ENCODE measurements at regions of chr1 and their contacts with region 1.

Region 1: DNA sequence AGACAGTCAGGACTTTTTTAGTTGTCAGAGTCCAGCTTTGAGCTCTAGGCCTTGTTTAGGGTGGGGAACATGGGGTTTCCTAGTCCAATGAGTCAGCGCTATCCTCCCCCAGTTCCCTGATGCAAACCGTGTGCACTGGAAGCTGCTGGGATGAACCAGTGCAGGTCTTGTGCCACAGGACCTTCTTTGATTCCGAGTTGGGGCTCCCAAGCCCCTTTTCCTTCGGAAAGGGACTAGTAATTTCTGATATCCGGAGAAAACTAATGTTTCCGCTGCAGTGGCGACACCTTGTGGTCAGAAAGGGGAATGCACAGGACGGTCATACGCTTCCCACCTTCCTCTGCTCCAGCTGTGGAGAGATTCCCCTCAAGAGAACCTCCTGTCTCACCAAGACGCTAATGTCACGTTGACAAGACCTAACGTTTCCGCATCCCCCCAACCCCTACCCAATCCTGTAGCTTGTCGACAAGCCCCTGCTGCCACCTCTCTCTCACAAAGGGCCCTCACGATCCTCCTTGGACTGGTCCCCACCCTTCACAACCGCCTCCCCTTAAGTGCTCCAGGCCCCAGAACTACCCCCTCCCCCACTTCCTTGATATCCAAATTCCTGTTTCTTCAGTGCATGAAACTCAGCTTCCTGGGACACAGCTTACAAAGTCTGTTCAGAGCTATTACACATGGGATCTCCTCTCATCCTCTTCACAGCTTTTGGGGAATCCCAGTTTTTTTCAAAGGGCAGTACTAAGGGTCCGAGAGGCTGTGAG is 30.9 kb downstream of the GPA33 start:
- DNase-seq: peak; percentile 79
- ATAC-seq: peak; percentile 79
- H3K4me3 ChIP-seq: no peak overlapping the region
- H3K4me3 Mint-ChIP-seq: no peak overlapping the region
- H3K27ac ChIP-seq: no peak overlapping the region
- H3K27ac Mint-ChIP-seq: no peak overlapping the region
- H3K4me1 ChIP-seq: peaks cover 3 to 6% of the 10 kb centered on the region in 2 donors
- H3K4me1 Mint-ChIP-seq: peaks cover 4% of the 10 kb centered on the region
- H3K27me3 ChIP-seq: peaks cover 0 to 10% (median 0%) of the 10 kb centered on the region in 4 experiments
- H3K27me3 Mint-ChIP-seq: peaks cover 3% of the 10 kb centered on the region
- CTCF ChIP-seq: peak; percentile 99

Region 2: DNA sequence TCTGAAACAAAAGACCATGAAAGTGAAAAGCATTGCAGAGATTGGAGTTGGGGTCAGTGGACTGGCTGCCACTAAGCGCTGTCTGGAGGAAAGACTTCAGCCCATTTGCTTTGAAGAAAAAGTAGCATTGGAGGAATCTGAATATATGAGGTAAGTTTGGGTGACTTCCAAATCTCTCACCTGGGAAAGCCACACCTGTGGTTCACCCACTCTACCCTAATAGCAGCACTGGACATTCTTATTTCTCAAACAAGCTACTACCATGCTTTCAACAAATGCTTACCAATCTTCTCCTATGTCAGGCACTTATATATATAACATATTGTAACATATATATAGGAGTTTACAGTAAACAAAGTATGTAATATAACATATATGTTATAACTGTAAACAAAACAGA is 295.9 kb before region 1 on chr1:
- CTCF ChIA-PET with region 1: no interaction called
- POLR2A ChIA-PET with region 1: no interaction called
- intact Hi-C with region 1: no loop called
- DNase-seq: no peak
- ATAC-seq: no peak
- H3K4me3 ChIP-seq: no peak overlapping the region
- H3K4me3 Mint-ChIP-seq: no peak overlapping the region
- H3K27ac ChIP-seq: no peak overlapping the region
- H3K27ac Mint-ChIP-seq: no peak overlapping the region
- H3K4me1 ChIP-seq: no peaks in the 10 kb centered on the region
- H3K4me1 Mint-ChIP-seq: no peaks in the 10 kb centered on the region
- H3K27me3 ChIP-seq: peaks cover 0 to 2% (median 0%) of the 10 kb centered on the region in 4 experiments
- H3K27me3 Mint-ChIP-seq: peaks cover 3% of the 10 kb centered on the region
- CTCF ChIP-seq: no peak

Region 3: GRCh38 chr1:166884040-166884642 is 175.1 kb before region 1 on chr1:
- CTCF ChIA-PET with region 1: interaction called, 41 read pairs
- POLR2A ChIA-PET with region 1: no interaction called
- intact Hi-C with region 1: no loop called
- DNase-seq: peak; percentile 56
- ATAC-seq: peak; percentile 63
- H3K4me3 ChIP-seq: peak overlapping the region in 1 of 5 experiments; percentile 1
- H3K4me3 Mint-ChIP-seq: no peak overlapping the region
- H3K27ac ChIP-seq: no peak overlapping the region
- H3K27ac Mint-ChIP-seq: no peak overlapping the region
- H3K4me1 ChIP-seq: peaks cover 14 to 18% of the 10 kb centered on the region in 2 donors
- H3K4me1 Mint-ChIP-seq: peaks cover 10% of the 10 kb centered on the region
- H3K27me3 ChIP-seq: peaks cover 0 to 35% (median 25%) of the 10 kb centered on the region in 4 experiments
- H3K27me3 Mint-ChIP-seq: peaks cover 34% of the 10 kb centered on the region
- CTCF ChIP-seq: peak; percentile 69

Region 4: GRCh38 chr1:166920561-166921475 is 138.4 kb before region 1 on chr1:
- CTCF ChIA-PET with region 1: interaction called, 944 read pairs
- POLR2A ChIA-PET with region 1: no interaction called
- intact Hi-C with region 1: no loop called
- DNase-seq: peak; percentile 57
- ATAC-seq: peak; percentile 55
- H3K4me3 ChIP-seq: peak overlapping the region in 3 of 5 experiments; percentile 33 to 59 (median 46)
- H3K4me3 Mint-ChIP-seq: peak overlapping the region; percentile 86
- H3K27ac ChIP-seq: no peak overlapping the region
- H3K27ac Mint-ChIP-seq: no peak overlapping the region
- H3K4me1 ChIP-seq: peaks cover 35 to 38% of the 10 kb centered on the region in 2 donors
- H3K4me1 Mint-ChIP-seq: peaks cover 33% of the 10 kb centered on the region
- H3K27me3 ChIP-seq: peaks cover 0 to 30% (median 23%) of the 10 kb centered on the region in 4 experiments
- H3K27me3 Mint-ChIP-seq: peaks cover 39% of the 10 kb centered on the region
- CTCF ChIP-seq: no peak

Region 5: GRCh38 chr1:167043752-167044488 is 15.3 kb before region 1 on chr1:
- CTCF ChIA-PET with region 1: interaction called, 17 read pairs
- POLR2A ChIA-PET with region 1: no interaction called
- intact Hi-C with region 1: no loop called
- DNase-seq: peak; percentile 77
- ATAC-seq: peak; percentile 91
- H3K4me3 ChIP-seq: peak overlapping the region; percentile 48 to 69 (median 53)
- H3K4me3 Mint-ChIP-seq: peak overlapping the region; percentile 83
- H3K27ac ChIP-seq: no peak overlapping the region
- H3K27ac Mint-ChIP-seq: peak overlapping the region; percentile 75
- H3K4me1 ChIP-seq: peaks cover 12 to 16% of the 10 kb centered on the region in 2 donors
- H3K4me1 Mint-ChIP-seq: peaks cover 12% of the 10 kb centered on the region
- H3K27me3 ChIP-seq: peaks cover 0 to 6% (median 6%) of the 10 kb centered on the region in 4 experiments
- H3K27me3 Mint-ChIP-seq: peaks cover 23% of the 10 kb centered on the region
- CTCF ChIP-seq: no peak

Region 6: GRCh38 chr1:167171286-167171929 is 112.2 kb after region 1 on chr1:
- CTCF ChIA-PET with region 1: no interaction called
- POLR2A ChIA-PET with region 1: no interaction called
- intact Hi-C with region 1: no loop called
- DNase-seq: no peak
- ATAC-seq: no peak
- H3K4me3 ChIP-seq: no peak overlapping the region
- H3K4me3 Mint-ChIP-seq: no peak overlapping the region
- H3K27ac ChIP-seq: no peak overlapping the region
- H3K27ac Mint-ChIP-seq: no peak overlapping the region
- H3K4me1 ChIP-seq: no peaks in the 10 kb centered on the region
- H3K4me1 Mint-ChIP-seq: no peaks in the 10 kb centered on the region
- H3K27me3 ChIP-seq: peaks cover 0 to 18% (median 5%) of the 10 kb centered on the region in 4 experiments
- H3K27me3 Mint-ChIP-seq: peaks cover 39% of the 10 kb centered on the region
- CTCF ChIP-seq: no peak

Region 7: GRCh38 chr1:167542109-167543032 is 483.1 kb after region 1 on chr1:
- CTCF ChIA-PET with region 1: interaction called, 11 read pairs
- POLR2A ChIA-PET with region 1: no interaction called
- intact Hi-C with region 1: no loop called
- DNase-seq: no peak
- ATAC-seq: no peak
- H3K4me3 ChIP-seq: no peak overlapping the region
- H3K4me3 Mint-ChIP-seq: no peak overlapping the region
- H3K27ac ChIP-seq: no peak overlapping the region
- H3K27ac Mint-ChIP-seq: no peak overlapping the region
- H3K4me1 ChIP-seq: peaks cover 3% of the 10 kb centered on the region in 2 donors
- H3K4me1 Mint-ChIP-seq: peaks cover 13% of the 10 kb centered on the region
- H3K27me3 ChIP-seq: no peaks in the 10 kb centered on the region
- H3K27me3 Mint-ChIP-seq: no peaks in the 10 kb centered on the region
- CTCF ChIP-seq: no peak

Measured in B cell (primary cell).